ENCODE measurements at regions of chr1 and their contacts with region 1.

Region 1: GRCh38 chr1:160466961-160467360 is 56.1 kb downstream of the SLAMF6 start:
- DNase-seq: no peak
- H3K4me3 ChIP-seq: peak overlapping the region; percentile 18
- H3K27ac ChIP-seq: peak overlapping the region; percentile 29
- H3K4me1 ChIP-seq: peaks cover 65% of the 10 kb centered on the region
- CTCF ChIP-seq: no peak

Region 2: GRCh38 chr1:160438935-160439334 is 28.0 kb before region 1 on chr1:
- CTCF ChIA-PET with region 1: no interaction called
- POLR2A ChIA-PET with region 1: interaction called, 10 read pairs
- intact Hi-C with region 1: no loop called
- DNase-seq: peak; percentile 26
- H3K4me3 ChIP-seq: no peak overlapping the region
- H3K27ac ChIP-seq: peak overlapping the region; percentile 59
- H3K4me1 ChIP-seq: peaks cover 38% of the 10 kb centered on the region
- CTCF ChIP-seq: no peak

Region 3: DNA sequence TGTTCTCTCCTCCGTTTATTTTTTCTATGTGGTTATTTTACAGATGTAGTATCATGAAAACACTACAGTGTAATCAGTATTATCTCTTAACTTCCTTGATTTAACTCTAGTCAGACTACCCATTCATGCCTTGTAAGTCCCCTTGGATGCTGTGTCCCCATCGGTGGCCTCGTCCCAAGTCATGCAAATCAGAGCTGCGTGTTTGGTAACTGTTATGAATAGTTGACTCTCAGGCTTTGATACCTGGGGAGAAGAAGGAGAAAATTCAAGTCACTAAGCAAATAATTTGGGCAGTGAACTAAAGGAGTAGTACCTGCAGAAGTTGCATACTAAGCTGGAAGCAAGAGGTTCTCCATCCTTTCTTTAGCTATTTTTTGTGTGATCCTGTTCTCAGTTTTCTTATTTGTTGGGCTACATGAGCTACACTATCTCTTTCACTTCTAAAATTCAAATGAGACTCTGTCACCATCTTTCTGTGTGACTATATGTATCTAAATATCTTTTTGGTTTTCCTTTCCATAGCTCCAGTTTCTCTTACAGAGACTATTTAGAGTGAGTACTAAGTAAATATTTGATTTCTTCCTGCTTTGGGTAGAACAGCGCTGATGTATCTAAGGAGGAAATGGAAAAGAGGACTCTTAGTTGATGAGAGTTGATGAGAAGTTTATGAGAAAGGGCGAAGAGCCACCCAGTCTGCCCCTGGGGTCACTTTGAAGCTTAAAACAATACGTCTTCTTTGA is 15.7 kb before region 1 on chr1:
- CTCF ChIA-PET with region 1: interaction called, 5 read pairs
- POLR2A ChIA-PET with region 1: interaction called, 40 read pairs
- intact Hi-C with region 1: no loop called
- DNase-seq: no peak
- H3K4me3 ChIP-seq: no peak overlapping the region
- H3K27ac ChIP-seq: no peak overlapping the region
- H3K4me1 ChIP-seq: peaks cover 34% of the 10 kb centered on the region
- CTCF ChIP-seq: no peak

Region 4: DNA sequence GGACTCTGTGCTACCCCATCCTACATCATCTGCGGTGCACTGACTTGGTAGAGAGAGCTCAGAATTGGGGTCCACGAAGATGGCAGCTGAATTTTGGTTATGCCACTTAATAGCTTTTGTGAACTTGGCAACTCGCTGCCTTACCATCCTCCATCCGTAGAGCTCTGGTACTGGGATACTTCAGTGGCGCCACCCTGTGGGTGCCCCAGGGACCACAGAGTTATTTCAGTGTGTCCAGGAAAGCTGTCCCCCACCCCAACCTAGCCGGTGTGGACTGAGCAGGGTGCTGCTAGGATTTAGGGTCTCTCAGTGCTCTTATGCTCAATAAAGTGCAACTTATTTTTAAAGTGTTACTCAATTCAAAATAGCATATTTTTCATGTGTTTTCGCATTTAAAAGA is 587.8 kb after region 1 on chr1:
- CTCF ChIA-PET with region 1: no interaction called
- POLR2A ChIA-PET with region 1: no interaction called
- intact Hi-C with region 1: no loop called
- DNase-seq: no peak
- H3K4me3 ChIP-seq: no peak overlapping the region
- H3K27ac ChIP-seq: no peak overlapping the region
- H3K4me1 ChIP-seq: no peaks in the 10 kb centered on the region
- CTCF ChIP-seq: peak; percentile 80

Region 5: GRCh38 chr1:161531986-161532643 is 1065.2 kb after region 1 on chr1:
- CTCF ChIA-PET with region 1: no interaction called
- POLR2A ChIA-PET with region 1: no interaction called
- intact Hi-C with region 1: no loop called
- DNase-seq: no peak
- H3K4me3 ChIP-seq: no peak overlapping the region
- H3K27ac ChIP-seq: no peak overlapping the region
- H3K4me1 ChIP-seq: peaks cover 9% of the 10 kb centered on the region
- CTCF ChIP-seq: no peak

Measured in OCI-LY7 (cell line).